GM18951 (cell line): ENCODE measurements at regions of chr17 and their contacts with region 1.

Region 1: DNA sequence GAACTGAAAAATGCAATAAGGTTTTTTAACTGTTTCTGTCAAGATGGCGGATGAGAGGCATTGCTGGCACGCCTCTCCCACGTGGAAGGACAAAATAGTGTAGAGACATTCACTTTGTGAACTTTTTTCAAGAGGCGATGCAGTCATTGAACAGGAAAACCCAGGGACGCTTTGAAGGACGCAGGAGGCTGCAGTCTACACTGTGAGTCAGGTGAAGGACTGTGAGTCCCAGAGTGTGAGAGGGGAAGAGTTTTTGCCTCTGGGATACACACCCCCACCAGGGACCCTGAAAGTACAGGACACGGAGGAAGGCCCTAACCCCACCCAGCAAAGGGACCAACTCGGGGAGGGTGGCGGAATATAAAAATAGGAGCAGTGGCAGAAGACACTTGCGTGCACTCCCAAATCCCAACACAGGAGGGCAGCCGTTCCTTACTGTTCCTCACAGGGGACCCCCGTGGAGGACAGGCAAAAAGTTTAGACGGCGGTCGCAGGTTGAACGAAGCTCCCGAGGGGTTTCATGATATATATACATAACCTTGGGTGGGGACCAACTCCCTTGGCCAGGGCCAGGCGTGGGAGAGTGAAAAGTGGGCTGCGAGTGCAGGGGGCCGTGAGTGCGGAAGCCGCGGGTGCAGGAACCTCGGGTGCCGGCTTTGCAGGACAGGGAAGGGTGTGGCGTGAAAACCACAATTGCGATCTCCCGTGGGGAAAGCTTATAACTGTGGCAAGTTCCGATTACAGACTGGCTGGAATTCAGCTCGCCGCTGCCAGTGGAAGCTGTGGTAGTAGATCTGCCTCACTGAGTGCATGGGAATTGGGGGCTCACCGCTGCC is 82.0 kb upstream of the ALOX12 start:
- POLR2A ChIP-seq: no peak

Region 2: DNA sequence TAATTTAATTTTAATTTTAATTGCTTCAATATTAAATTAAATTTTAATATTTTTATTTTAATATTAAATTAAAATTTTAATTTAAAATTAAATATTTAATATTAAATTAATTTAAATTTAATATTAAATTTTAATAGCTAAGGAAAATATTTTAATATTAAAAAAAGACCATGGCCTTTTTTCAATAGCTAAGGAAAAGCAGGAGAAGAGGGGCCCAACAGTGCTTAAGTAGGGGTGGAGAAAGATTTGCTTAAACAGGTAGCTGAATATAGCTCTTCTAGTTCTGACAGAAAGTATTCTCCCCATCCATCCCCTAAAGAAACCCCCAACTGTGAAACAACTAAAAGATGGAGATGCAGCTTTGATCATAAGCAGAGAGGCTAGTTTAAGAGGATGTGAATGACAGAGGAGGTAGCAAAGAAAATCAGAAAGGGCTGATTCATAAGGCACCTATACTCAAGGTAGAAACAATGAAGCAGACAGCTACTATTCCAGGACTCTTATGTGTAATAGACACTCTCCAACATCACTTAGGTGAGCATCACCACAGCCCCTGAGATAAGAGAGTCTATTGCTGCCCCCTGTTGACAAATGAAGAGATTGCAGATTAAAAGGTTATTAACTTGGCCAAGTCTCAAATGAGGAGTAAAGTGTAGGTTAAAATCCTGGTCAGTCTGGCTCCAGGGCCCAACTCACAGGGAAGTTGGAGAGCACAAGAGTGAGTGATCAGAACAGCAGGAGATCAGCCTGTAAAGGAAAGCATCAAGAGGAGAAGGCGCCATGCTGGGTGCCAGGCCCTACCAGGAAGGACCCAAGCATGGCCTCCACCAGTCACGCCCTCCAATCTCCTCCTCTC is 90.8 kb after region 1 on chr17:
- in situ Hi-C with region 1: loop called (anchors 10 kb)
- POLR2A ChIP-seq: no peak

Region 3: GRCh38 chr17:7147772-7148171 is 233.9 kb after region 1 on chr17:
- in situ Hi-C with region 1: loop called (anchors 10 kb)
- POLR2A ChIP-seq: no peak